ENCODE measurements at regions of chr1 and their contacts with region 1.

Region 1: DNA sequence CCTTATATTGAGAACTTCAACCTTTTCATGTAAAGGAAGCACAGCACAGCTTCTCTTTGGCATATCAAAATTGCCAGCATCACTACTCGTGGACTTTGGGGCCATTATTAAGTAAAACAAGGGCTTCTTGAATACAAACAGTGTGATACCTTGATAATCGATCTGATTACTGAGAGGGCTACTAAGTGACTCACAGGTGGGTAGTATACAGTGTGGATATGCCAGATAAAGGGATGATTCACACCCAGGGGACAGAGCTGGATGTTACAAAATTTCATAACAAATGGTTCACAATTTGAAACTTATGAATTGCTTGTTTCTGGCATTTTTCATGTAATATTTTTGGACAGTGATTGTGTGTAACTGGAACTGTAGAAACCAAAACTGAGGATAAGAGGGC is 15.4 kb downstream of the HDAC1 start:
- DNase-seq: no peak
- H3K4me3 ChIP-seq: no peak overlapping the region
- H3K27me3 ChIP-seq: no peaks in the 10 kb centered on the region
- CTCF ChIP-seq: no peak

Region 2: GRCh38 chr1:32172621-32173245 is 134.6 kb before region 1 on chr1:
- CTCF ChIA-PET with region 1: no interaction called
- POLR2A ChIA-PET with region 1: interaction called, 18 read pairs
- DNase-seq: no peak
- H3K4me3 ChIP-seq: no peak overlapping the region
- H3K27me3 ChIP-seq: no peaks in the 10 kb centered on the region
- CTCF ChIP-seq: no peak

Region 3: GRCh38 chr1:32263744-32264143 is 43.6 kb before region 1 on chr1:
- CTCF ChIA-PET with region 1: no interaction called
- POLR2A ChIA-PET with region 1: interaction called, 11 read pairs
- DNase-seq: no peak
- H3K4me3 ChIP-seq: no peak overlapping the region
- H3K27me3 ChIP-seq: no peaks in the 10 kb centered on the region
- CTCF ChIP-seq: no peak

Region 4: GRCh38 chr1:32291708-32292492 is 15.4 kb before region 1 on chr1 and contains the start of gene HDAC1:
- CTCF ChIA-PET with region 1: no interaction called
- POLR2A ChIA-PET with region 1: no interaction called
- DNase-seq: peak; percentile 59
- H3K4me3 ChIP-seq: peak within 1 kb of the TSS; percentile 97
- H3K27me3 ChIP-seq: no peaks in the 10 kb centered on the region
- CTCF ChIP-seq: no peak
- polyA plus RNA-seq, gene HDAC1: 155 and 185 TPM in 2 replicates

Measured in BJ (cell line).